A673 (cell line): ENCODE measurements at regions of chr2 and their contacts with region 1.

Region 1: GRCh38 chr2:159035790-159036411 is 67.5 kb downstream of the TANC1 start:
- DNase-seq: peak; percentile 5
- H3K4me3 ChIP-seq: no peak overlapping the region
- H3K27ac ChIP-seq: no peak overlapping the region
- H3K4me1 ChIP-seq: peaks cover 2% of the 10 kb centered on the region
- H3K27me3 ChIP-seq: no peaks in the 10 kb centered on the region
- CTCF ChIP-seq: peak; percentile 25; the same call in 1 of the 2 replicates

Region 2: DNA sequence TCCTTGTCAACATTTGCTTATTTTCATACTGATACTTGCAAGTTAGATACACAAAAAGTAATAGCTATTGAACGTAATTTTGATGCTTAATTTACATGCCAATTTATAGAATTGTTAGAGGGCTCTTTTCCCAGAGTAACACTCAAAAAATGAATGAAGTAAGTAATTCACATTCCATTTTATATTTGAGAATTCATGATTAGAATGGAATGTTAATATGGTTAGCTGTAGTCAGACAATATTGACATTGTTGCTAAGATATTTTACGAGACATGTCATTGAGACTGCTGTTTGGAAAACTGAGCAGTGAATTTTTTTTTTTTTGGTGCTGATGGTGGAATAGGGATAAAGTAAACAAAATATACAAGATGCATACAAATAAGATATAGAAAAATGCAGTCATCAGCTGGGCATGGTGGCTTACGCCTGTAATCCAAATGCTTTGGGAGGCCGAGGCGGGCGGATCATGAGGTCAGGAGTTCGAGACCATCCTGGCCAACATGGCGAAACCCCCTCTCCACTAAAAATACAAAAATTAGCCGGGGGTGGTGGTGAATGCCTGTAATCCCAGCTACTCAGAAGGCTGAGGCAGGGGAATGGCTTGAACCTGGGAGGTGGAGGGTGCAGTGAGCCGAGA is 47.8 kb after region 1 on chr2:
- CTCF ChIA-PET with region 1: no interaction called
- POLR2A ChIA-PET with region 1: no interaction called
- intact Hi-C with region 1: no loop called
- DNase-seq: peak; percentile 33
- H3K4me3 ChIP-seq: no peak overlapping the region
- H3K27ac ChIP-seq: no peak overlapping the region
- H3K4me1 ChIP-seq: peaks cover 18% of the 10 kb centered on the region
- H3K27me3 ChIP-seq: no peaks in the 10 kb centered on the region
- CTCF ChIP-seq: no peak

Region 3: DNA sequence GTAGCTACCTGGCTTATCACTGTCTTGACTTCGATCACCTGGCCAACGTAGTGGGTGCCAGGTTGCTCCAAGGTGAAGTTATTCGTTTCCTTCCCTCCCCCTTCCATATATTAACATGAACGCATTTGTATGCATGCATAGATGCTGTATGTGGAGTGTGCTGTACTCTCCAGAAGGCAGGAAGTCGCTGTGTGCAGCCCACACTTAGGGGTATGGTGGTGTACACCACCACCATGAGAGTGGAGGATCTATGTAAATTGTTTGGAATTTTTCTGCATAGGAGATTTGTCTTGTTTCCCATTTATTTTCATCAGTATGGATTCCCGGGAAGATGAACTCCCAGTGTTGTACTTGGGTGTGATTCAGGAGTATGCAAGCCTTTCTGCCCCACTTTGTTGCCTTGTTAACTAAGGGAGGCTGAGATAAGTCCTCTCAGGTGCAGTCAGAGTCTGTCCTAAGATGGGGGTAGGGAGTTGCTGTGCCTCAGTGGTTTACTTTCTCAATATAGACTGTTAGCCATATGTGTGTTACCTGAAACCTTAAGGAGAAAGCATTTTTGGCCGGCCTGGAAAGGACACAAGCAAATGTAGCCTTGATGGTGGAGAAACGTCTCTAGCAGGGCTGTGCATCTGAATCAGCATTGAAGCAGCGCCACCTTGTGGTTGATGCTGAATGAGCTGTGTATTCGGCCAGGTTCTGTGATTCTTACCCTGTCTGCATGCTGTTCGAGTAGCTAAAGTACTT is 82.4 kb after region 1 on chr2:
- CTCF ChIA-PET with region 1: interaction called, 4 read pairs
- POLR2A ChIA-PET with region 1: no interaction called
- intact Hi-C with region 1: loop called (anchors 2 kb)
- DNase-seq: peak; percentile 84
- H3K4me3 ChIP-seq: no peak overlapping the region
- H3K27ac ChIP-seq: no peak overlapping the region
- H3K4me1 ChIP-seq: no peaks in the 10 kb centered on the region
- H3K27me3 ChIP-seq: no peaks in the 10 kb centered on the region
- CTCF ChIP-seq: peak; percentile 94